ENCODE measurements at regions of chr15 and their contacts with region 1.

Region 1: GRCh38 chr15:45205192-45205591 is 17.4 kb upstream of the SHF start:
- DNase-seq: peak; percentile 78
- ATAC-seq: peak; percentile 28
- H3K4me3 Mint-ChIP-seq: no peak overlapping the region
- H3K27ac Mint-ChIP-seq: no peak overlapping the region
- H3K4me1 Mint-ChIP-seq: peaks cover 5% of the 10 kb centered on the region
- H3K27me3 Mint-ChIP-seq: peaks cover 6% of the 10 kb centered on the region

Region 2: DNA sequence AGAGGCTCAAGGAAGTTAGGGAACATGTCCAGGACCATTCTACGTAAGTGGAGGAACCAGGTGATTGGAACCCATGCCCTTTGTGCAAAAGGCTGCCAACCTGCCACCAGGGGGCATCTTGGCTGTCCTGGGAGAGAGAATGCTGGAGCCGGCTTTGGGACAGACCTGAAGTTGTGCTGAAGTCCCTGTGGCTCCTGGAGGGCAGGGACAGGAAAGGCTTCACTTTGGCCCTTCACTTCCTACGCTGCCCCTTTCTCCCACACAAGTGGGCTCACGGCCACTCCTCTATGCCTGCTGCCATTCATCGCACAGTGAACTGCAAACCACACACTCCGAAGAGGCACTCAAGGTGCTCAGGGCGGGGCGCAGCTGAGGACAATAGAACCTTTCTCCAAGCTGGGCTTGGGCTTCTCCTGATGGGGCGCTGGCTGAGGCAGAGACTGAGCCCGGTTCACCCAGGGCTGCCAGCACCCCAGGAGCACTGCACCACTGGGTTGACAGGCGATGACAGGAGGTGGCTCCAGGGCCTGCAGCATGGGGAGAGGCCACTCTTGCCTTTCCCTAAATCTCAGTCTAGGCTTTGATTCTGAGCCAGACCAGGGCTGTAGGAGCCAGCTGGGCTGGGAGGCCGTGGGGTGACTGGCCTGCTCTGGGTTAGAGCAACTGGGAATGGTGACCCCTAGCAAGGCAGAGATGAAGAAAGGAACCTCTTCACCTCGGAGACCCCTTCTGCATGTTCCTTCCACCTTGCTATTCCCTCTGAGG is 25.8 kb before region 1 on chr15:
- CTCF ChIA-PET with region 1: interaction called, 31 read pairs
- POLR2A ChIA-PET with region 1: interaction called, 33 read pairs
- DNase-seq: peak; percentile 50
- ATAC-seq: peak; percentile 16
- H3K4me3 Mint-ChIP-seq: no peak overlapping the region
- H3K27ac Mint-ChIP-seq: no peak overlapping the region
- H3K4me1 Mint-ChIP-seq: peaks cover 22% of the 10 kb centered on the region
- H3K27me3 Mint-ChIP-seq: no peaks in the 10 kb centered on the region

Region 3: GRCh38 chr15:45221053-45221599 is 15.9 kb after region 1 on chr15:
- CTCF ChIA-PET with region 1: interaction called, 14 read pairs
- POLR2A ChIA-PET with region 1: no interaction called
- DNase-seq: no peak
- ATAC-seq: no peak
- H3K4me3 Mint-ChIP-seq: no peak overlapping the region
- H3K27ac Mint-ChIP-seq: no peak overlapping the region
- H3K4me1 Mint-ChIP-seq: no peaks in the 10 kb centered on the region
- H3K27me3 Mint-ChIP-seq: peaks cover 27% of the 10 kb centered on the region

Region 4: DNA sequence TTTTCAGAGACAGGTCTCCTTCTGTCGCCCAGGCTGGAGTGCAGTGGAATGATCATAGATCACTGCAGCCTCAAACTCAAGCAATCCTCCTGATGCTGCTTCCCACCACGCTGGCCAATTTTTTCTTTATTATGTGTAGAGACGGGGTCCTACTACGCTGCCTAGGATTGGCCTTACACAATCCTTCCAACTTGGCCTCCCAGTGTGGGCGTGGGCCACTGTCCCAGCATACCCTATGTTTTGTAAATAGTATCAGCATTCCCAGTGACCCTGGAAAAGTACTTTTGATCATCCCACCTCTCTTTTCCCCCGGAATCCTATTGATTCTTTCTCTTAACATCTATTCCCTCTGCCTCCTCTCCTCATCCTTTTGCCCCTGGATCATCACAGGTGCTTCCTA is 83.8 kb after region 1 on chr15:
- CTCF ChIA-PET with region 1: no interaction called
- POLR2A ChIA-PET with region 1: no interaction called
- DNase-seq: no peak
- ATAC-seq: no peak
- H3K4me3 Mint-ChIP-seq: no peak overlapping the region
- H3K27ac Mint-ChIP-seq: no peak overlapping the region
- H3K4me1 Mint-ChIP-seq: no peaks in the 10 kb centered on the region
- H3K27me3 Mint-ChIP-seq: peaks cover 9% of the 10 kb centered on the region

Region 5: GRCh38 chr15:45391746-45392583 is 186.8 kb after region 1 on chr15:
- CTCF ChIA-PET with region 1: interaction called, 82 read pairs
- POLR2A ChIA-PET with region 1: no interaction called
- DNase-seq: no peak
- ATAC-seq: peak; percentile 5
- H3K4me3 Mint-ChIP-seq: no peak overlapping the region
- H3K27ac Mint-ChIP-seq: no peak overlapping the region
- H3K4me1 Mint-ChIP-seq: no peaks in the 10 kb centered on the region
- H3K27me3 Mint-ChIP-seq: peaks cover 20% of the 10 kb centered on the region

Measured in activated CD8-positive, alpha-beta T cell treated with anti-CD3 and anti-CD28 coated beads, Interleukin-2, amount 10 ng/mL, durations not matched to agents 7 days and 5 days (primary cell).